AG04449 (cell line): ENCODE measurements at regions of chr1 and their contacts with region 1.

Region 1: GRCh38 chr1:32005522-32005921 is 8.1 kb upstream of the KHDRBS1 start:
- DNase-seq: no peak
- H3K4me3 ChIP-seq: no peak overlapping the region
- CTCF ChIP-seq: no peak

Region 2: GRCh38 chr1:31977385-31978131 is 28.0 kb before region 1 on chr1:
- CTCF ChIA-PET with region 1: interaction called, 140 read pairs
- POLR2A ChIA-PET with region 1: no interaction called
- DNase-seq: peak; percentile 59
- H3K4me3 ChIP-seq: no peak overlapping the region
- CTCF ChIP-seq: peak; percentile 41

Region 3: DNA sequence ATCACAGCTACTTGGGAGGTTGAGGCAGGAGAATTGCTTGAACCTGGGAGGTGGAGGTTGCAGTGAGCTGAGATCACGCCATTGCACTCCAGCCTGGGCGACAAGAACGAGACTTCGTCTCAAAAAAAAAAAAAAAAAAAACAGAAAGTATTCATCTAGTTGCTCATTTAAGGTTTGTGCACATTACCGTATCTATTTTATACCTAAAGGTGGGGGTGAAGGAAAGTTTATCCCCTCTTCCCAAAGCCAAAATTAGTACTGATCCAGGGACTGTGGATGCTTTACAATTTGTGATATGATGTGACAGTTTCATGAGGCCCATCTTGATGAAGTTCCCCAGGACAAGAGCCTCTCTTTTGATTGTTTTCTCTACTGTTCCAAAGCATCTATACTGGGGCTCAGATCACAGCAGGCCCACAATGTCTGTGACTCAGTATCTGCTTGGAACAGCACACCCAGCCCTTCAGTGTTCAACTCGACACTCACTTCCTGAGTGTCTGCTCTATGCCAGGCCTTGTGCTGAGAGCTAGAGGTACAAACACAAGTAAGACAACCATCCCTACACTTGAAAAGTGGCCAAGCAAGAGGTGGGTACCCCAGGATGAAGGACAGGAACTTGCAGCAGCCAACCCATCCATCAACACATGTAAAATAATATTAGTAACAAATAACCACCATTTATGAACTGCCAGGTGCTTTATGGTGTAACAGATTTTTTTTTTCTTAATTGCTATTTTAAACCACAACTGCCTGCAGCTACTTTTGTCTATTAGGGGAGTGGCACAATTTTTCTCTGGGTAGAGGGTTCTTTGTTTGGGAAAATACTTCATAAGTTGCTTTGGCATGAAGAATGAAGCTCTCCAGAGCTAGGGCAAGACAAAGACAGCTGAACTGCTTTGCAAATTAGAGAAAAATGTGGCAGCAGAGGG is 20.8 kb before region 1 on chr1:
- CTCF ChIA-PET with region 1: interaction called, 140 read pairs
- POLR2A ChIA-PET with region 1: no interaction called
- DNase-seq: no peak
- H3K4me3 ChIP-seq: no peak overlapping the region
- CTCF ChIP-seq: no peak

Region 4: GRCh38 chr1:32020339-32020738 is 14.8 kb after region 1 on chr1:
- CTCF ChIA-PET with region 1: interaction called, 25 read pairs
- POLR2A ChIA-PET with region 1: no interaction called
- DNase-seq: no peak
- H3K4me3 ChIP-seq: no peak overlapping the region
- CTCF ChIP-seq: no peak